ENCODE measurements at regions of chr20 and their contacts with region 1.

Region 1: GRCh38 chr20:17536944-17537444 is 5.8 kb upstream of the BFSP1 start:
- DNase-seq: peak; percentile 64 to 76 (median 70)
- H3K4me3 ChIP-seq: no peak overlapping the region
- H3K4me3 Mint-ChIP-seq: no peak overlapping the region
- H3K27ac ChIP-seq: no peak overlapping the region
- H3K27ac Mint-ChIP-seq: no peak overlapping the region
- H3K4me1 ChIP-seq: peaks cover 8% of the 10 kb centered on the region
- H3K4me1 Mint-ChIP-seq: peaks cover 10 to 18% (median 15%) of the 10 kb centered on the region in 4 donors
- H3K27me3 ChIP-seq: no peaks in the 10 kb centered on the region
- H3K27me3 Mint-ChIP-seq: peaks cover 16 to 20% of the 10 kb centered on the region in 2 donors

Region 2: DNA sequence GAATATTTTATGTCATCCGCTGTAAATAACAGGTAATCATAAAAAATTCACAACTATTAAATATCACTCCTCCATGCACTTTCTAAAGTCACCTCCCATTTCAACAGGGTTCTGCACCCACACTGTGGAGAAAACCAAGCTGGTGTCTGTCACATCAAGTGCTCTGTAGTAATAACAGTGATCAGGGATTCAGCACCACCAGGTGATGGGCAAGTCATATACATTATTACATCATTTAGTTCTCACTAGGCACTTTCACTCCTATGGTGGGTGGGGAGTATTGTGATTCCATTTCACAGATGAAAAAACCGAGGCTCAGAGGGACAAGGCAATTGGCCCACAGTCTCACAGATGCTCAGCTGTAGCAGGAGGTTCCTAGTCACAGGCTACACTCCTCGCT is 14.5 kb before region 1 on chr20:
- CTCF ChIA-PET with region 1: no interaction called
- POLR2A ChIA-PET with region 1: no interaction called
- intact Hi-C with region 1: no loop called
- DNase-seq: no peak
- H3K4me3 ChIP-seq: no peak overlapping the region
- H3K4me3 Mint-ChIP-seq: no peak overlapping the region
- H3K27ac ChIP-seq: no peak overlapping the region
- H3K27ac Mint-ChIP-seq: no peak overlapping the region
- H3K4me1 ChIP-seq: no peaks in the 10 kb centered on the region
- H3K4me1 Mint-ChIP-seq: peaks cover 0 to 3% (median 3%) of the 10 kb centered on the region in 4 donors
- H3K27me3 ChIP-seq: no peaks in the 10 kb centered on the region
- H3K27me3 Mint-ChIP-seq: no peaks in the 10 kb centered on the region

Region 3: DNA sequence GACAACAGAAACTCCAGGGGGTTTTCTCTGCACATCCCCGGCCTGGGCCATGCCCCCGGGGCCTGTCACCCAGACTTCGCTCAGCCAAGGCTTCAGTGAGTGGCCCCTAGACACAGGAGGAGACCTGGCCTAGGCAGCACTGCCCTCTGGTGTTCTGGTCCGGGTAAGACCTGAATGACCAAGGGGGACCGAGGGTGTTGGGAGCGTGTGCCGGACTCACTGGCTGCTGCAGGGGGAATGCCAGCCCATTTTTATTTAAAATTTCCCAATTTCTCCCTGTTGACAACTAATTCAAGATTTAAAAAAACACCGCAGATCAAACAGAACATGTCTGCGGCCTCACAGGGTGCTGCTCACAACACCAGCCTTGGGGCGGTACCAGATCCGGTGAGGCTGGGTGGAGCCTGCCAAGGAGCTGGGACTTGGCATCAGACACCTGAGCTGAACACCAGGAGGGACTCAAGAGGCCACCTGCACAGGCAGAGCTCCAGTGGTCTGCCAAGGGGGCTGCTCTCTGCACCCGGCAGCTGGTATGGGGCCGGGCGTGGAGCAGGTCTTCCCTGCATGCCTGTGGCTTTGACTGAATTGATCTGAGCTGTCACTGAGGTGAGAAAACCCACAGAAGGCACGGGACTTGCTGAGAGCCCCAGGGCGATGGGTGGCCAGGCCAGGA is 80.7 kb after region 1 on chr20:
- CTCF ChIA-PET with region 1: interaction called, 26 read pairs
- POLR2A ChIA-PET with region 1: no interaction called
- intact Hi-C with region 1: loop called (anchors 1 kb)
- DNase-seq: peak in 4 of 5 donors; percentile 33 to 46 (median 36)
- H3K4me3 ChIP-seq: no peak overlapping the region
- H3K4me3 Mint-ChIP-seq: no peak overlapping the region
- H3K27ac ChIP-seq: no peak overlapping the region
- H3K27ac Mint-ChIP-seq: peak overlapping the region in 1 of 7 donors; percentile 42
- H3K4me1 ChIP-seq: peaks cover 3% of the 10 kb centered on the region
- H3K4me1 Mint-ChIP-seq: peaks cover 2 to 9% (median 5%) of the 10 kb centered on the region in 4 donors
- H3K27me3 ChIP-seq: no peaks in the 10 kb centered on the region
- H3K27me3 Mint-ChIP-seq: no peaks in the 10 kb centered on the region

Region 4: DNA sequence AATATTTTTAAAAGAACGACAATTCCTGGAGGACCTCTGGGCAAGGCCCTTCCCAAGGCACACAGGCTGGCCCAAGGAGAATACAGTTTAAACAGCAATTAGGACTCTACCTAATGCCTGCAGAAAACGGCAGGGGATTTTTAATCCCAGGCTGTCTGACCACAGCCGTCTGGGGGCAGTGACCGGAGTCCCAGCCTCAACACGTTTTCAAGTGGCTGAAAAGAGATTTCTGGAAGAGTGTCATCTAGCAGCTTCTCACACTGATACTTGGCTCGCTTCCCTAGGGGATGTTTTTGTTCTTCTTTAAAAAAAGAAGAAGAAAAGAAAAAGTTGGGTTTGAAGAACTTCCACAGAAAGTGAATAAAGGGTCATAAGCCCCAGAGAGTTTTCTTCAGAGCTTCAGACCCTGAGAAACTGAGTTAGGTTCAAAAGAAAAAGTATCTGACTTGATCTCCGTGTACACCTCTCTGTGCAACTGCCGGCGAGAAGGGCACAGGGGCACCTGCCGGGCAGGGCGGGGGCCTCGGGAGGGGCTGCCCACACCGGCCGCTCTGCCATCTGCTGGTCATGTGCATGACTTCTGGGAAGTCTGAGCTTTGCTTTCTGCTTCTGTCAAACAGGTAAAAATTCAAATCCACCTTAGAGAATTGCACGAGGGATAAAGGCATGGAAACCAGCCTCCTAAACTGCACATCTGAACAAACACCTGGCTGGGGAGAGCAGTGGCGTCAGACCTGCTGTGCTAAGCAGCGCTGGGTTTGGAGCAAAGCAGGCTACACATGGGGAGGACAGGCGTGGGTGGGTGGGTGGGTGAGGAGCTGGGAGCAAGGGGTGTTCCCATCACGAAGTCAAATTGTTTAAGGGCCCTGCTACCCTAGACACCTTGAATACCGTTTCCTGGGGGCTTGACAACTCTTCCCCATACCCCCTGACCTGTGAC is 112.1 kb after region 1 on chr20:
- CTCF ChIA-PET with region 1: interaction called, 8 read pairs
- POLR2A ChIA-PET with region 1: no interaction called
- intact Hi-C with region 1: loop called (anchors 1 kb)
- DNase-seq: peak in 4 of 5 donors; percentile 17 to 24 (median 20)
- H3K4me3 ChIP-seq: no peak overlapping the region
- H3K4me3 Mint-ChIP-seq: no peak overlapping the region
- H3K27ac ChIP-seq: no peak overlapping the region
- H3K27ac Mint-ChIP-seq: peak overlapping the region in 4 of 7 donors; percentile 25 to 84 (median 62)
- H3K4me1 ChIP-seq: no peaks in the 10 kb centered on the region
- H3K4me1 Mint-ChIP-seq: peaks cover 2 to 8% (median 4%) of the 10 kb centered on the region in 4 donors
- H3K27me3 ChIP-seq: no peaks in the 10 kb centered on the region
- H3K27me3 Mint-ChIP-seq: no peaks in the 10 kb centered on the region

Measured in CD4-positive, alpha-beta memory T cell (primary cell).